ENCODE measurements at regions of chr21 and their contacts with region 1.

Region 1: GRCh38 chr21:17819114-17819876 is at the start of gene C21orf91:
- DNase-seq: peak; percentile 71 to 89 (median 82)
- ATAC-seq: peak; percentile 87 to 89 (median 88)
- H3K4me3 ChIP-seq: peak within 1 kb of the TSS; percentile 61 to 77
- H3K4me3 Mint-ChIP-seq: peak within 1 kb of the TSS; percentile 82 to 99 (median 95)
- H3K27ac ChIP-seq: peak within 1 kb of the TSS; percentile 84
- H3K27ac Mint-ChIP-seq: peak within 1 kb of the TSS; percentile 99
- H3K4me1 ChIP-seq: peaks cover 15 to 35% of the 10 kb centered on the region in 2 experiments
- H3K4me1 Mint-ChIP-seq: peaks cover 46 to 51% (median 49%) of the 10 kb centered on the region in 3 donors
- H3K27me3 ChIP-seq: no peaks in the 10 kb centered on the region
- H3K27me3 Mint-ChIP-seq: no peaks in the 10 kb centered on the region
- total RNA-seq, gene C21orf91: 41.1 to 52.6 (median 48.5) TPM

Region 2: DNA sequence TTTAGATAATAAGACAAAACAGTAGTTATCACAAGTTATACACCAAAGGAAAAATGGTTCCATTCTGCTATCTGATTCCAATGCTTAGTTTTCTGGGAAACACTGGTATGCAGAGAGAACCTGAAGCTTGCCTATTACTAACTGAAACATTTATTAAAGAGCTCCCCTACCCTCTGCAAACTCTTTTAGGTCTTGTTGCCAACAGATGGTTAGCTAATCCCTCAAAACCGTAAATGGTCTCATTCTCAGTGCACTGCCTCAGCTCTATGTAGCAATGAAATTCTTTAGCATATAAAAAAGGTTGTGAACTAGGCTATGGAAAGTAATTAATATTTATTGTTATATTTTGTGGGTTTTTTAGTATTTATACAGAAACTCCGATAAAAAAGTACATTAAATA is 20.5 kb before region 1 on chr21:
- CTCF ChIA-PET with region 1: interaction called in 1 of 2 experiments, 4 read pairs
- POLR2A ChIA-PET with region 1: interaction called in 1 of 2 experiments, 21 read pairs
- DNase-seq: no peak
- ATAC-seq: no peak
- H3K4me3 ChIP-seq: no peak overlapping the region
- H3K4me3 Mint-ChIP-seq: no peak overlapping the region
- H3K27ac ChIP-seq: peak overlapping the region; percentile 74
- H3K27ac Mint-ChIP-seq: peak overlapping the region; percentile 9 to 82
- H3K4me1 ChIP-seq: peaks cover 17 to 18% of the 10 kb centered on the region in 2 experiments
- H3K4me1 Mint-ChIP-seq: peaks cover 62 to 67% (median 66%) of the 10 kb centered on the region in 3 donors
- H3K27me3 ChIP-seq: no peaks in the 10 kb centered on the region
- H3K27me3 Mint-ChIP-seq: no peaks in the 10 kb centered on the region

Region 3: GRCh38 chr21:17858747-17859146 is 39.5 kb after region 1 on chr21:
- CTCF ChIA-PET with region 1: no interaction called
- POLR2A ChIA-PET with region 1: no interaction called
- DNase-seq: no peak
- ATAC-seq: no peak
- H3K4me3 ChIP-seq: no peak overlapping the region
- H3K4me3 Mint-ChIP-seq: no peak overlapping the region
- H3K27ac ChIP-seq: no peak overlapping the region
- H3K27ac Mint-ChIP-seq: no peak overlapping the region
- H3K4me1 ChIP-seq: no peaks in the 10 kb centered on the region
- H3K4me1 Mint-ChIP-seq: no peaks in the 10 kb centered on the region
- H3K27me3 ChIP-seq: no peaks in the 10 kb centered on the region
- H3K27me3 Mint-ChIP-seq: peaks cover 2 to 7% of the 10 kb centered on the region in 2 donors